CD8-positive, alpha-beta T cell (primary cell): ENCODE measurements at regions of chr15 and their contacts with region 1.

Region 1: GRCh38 chr15:85380217-85380811 is at the start of gene AKAP13:
- DNase-seq: peak; percentile 87 to 99 (median 93)
- ATAC-seq: peak; percentile 72
- H3K4me3 ChIP-seq: peak within 1 kb of the TSS; percentile 55 to 68
- H3K4me3 Mint-ChIP-seq: peak within 1 kb of the TSS; percentile 87
- H3K27ac ChIP-seq: peak within 1 kb of the TSS; percentile 56 to 66
- H3K27ac Mint-ChIP-seq: peak within 1 kb of the TSS; percentile 94
- H3K4me1 ChIP-seq: peaks cover 48% of the 10 kb centered on the region
- H3K4me1 Mint-ChIP-seq: peaks cover 56% of the 10 kb centered on the region
- H3K27me3 ChIP-seq: no peaks in the 10 kb centered on the region
- H3K27me3 Mint-ChIP-seq: no peaks in the 10 kb centered on the region
- CTCF ChIP-seq: no peak
- total RNA-seq, gene AKAP13: 255 to 267 TPM

Region 2: DNA sequence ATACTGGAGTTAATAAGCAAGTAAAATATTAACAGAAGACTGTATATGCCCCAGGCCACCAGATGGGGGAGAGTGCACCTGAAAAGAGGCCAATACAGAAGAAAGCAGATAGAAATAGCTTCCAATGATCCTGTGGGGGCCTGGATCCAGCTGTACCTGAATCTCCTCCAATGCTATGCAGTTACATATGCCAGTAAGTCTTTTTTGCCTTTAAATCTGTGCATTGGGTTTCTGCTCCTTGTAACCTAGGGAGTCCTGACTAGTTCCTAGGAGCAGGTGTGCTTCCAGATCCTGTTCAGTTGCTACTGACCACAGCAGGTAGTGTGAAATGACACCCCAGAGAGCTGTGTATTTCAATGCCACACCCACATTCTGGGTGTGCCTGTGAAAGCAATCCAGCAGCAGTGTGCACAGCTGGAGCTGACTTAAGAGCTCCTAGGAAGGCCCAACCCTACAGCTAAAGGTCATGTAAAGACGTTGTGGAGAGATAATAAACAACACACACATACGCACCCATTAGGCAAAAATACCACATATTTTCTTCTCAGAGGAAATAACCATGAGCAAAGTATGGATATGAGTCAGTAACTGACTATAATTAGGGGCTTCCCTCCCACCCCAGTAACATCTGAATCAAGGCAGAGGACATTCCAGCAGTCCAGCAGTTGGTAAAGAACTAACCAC is 62.1 kb before region 1 on chr15:
- CTCF ChIA-PET with region 1: no interaction called
- POLR2A ChIA-PET with region 1: interaction called, 3 read pairs
- intact Hi-C with region 1: loop called in 1 of 2 experiments (anchors 5 kb)
- DNase-seq: peak in 3 of 9 experiments; percentile 14 to 45 (median 38)
- ATAC-seq: peak; percentile 77
- H3K4me3 ChIP-seq: no peak overlapping the region
- H3K4me3 Mint-ChIP-seq: no peak overlapping the region
- H3K27ac ChIP-seq: no peak overlapping the region
- H3K27ac Mint-ChIP-seq: peak overlapping the region; percentile 53
- H3K4me1 ChIP-seq: peaks cover 24% of the 10 kb centered on the region
- H3K4me1 Mint-ChIP-seq: peaks cover 31% of the 10 kb centered on the region
- H3K27me3 ChIP-seq: no peaks in the 10 kb centered on the region
- H3K27me3 Mint-ChIP-seq: no peaks in the 10 kb centered on the region
- CTCF ChIP-seq: no peak

Region 3: GRCh38 chr15:85330901-85331588 is 49.3 kb before region 1 on chr15:
- CTCF ChIA-PET with region 1: interaction called, 6 read pairs
- POLR2A ChIA-PET with region 1: interaction called, 19 read pairs
- intact Hi-C with region 1: loop called (anchors 1 to 2 kb)
- DNase-seq: peak; percentile 37 to 86 (median 71)
- ATAC-seq: peak; percentile 77
- H3K4me3 ChIP-seq: peak overlapping the region; percentile 42 to 55
- H3K4me3 Mint-ChIP-seq: peak overlapping the region; percentile 92
- H3K27ac ChIP-seq: peak overlapping the region; percentile 14 to 58
- H3K27ac Mint-ChIP-seq: peak overlapping the region; percentile 93
- H3K4me1 ChIP-seq: peaks cover 26% of the 10 kb centered on the region
- H3K4me1 Mint-ChIP-seq: peaks cover 48% of the 10 kb centered on the region
- H3K27me3 ChIP-seq: no peaks in the 10 kb centered on the region
- H3K27me3 Mint-ChIP-seq: no peaks in the 10 kb centered on the region
- CTCF ChIP-seq: peak; percentile 43

Region 4: GRCh38 chr15:85407804-85408746 is 27.8 kb after region 1 on chr15:
- CTCF ChIA-PET with region 1: interaction called, 24 read pairs
- POLR2A ChIA-PET with region 1: interaction called, 14 read pairs
- intact Hi-C with region 1: loop called (anchors 1 to 2 kb)
- DNase-seq: peak in 4 of 9 experiments; percentile 7 to 64 (median 32)
- ATAC-seq: peak; percentile 73
- H3K4me3 ChIP-seq: no peak overlapping the region
- H3K4me3 Mint-ChIP-seq: peak overlapping the region; percentile 30
- H3K27ac ChIP-seq: peak overlapping the region in 1 of 2 experiments; percentile 26
- H3K27ac Mint-ChIP-seq: peak overlapping the region; percentile 71
- H3K4me1 ChIP-seq: peaks cover 51% of the 10 kb centered on the region
- H3K4me1 Mint-ChIP-seq: peaks cover 79% of the 10 kb centered on the region
- H3K27me3 ChIP-seq: no peaks in the 10 kb centered on the region
- H3K27me3 Mint-ChIP-seq: no peaks in the 10 kb centered on the region
- CTCF ChIP-seq: no peak

Region 5: GRCh38 chr15:85412956-85413854 is 32.9 kb after region 1 on chr15:
- CTCF ChIA-PET with region 1: interaction called, 24 read pairs
- POLR2A ChIA-PET with region 1: interaction called, 14 read pairs
- intact Hi-C with region 1: loop called (anchors 1 to 5 kb)
- DNase-seq: peak; percentile 42 to 86 (median 75)
- ATAC-seq: peak; percentile 95
- H3K4me3 ChIP-seq: peak overlapping the region in 1 of 2 experiments; percentile 12
- H3K4me3 Mint-ChIP-seq: peak overlapping the region; percentile 56
- H3K27ac ChIP-seq: peak overlapping the region in 1 of 2 experiments; percentile 77
- H3K27ac Mint-ChIP-seq: peak overlapping the region; percentile 89
- H3K4me1 ChIP-seq: peaks cover 26% of the 10 kb centered on the region
- H3K4me1 Mint-ChIP-seq: peaks cover 65% of the 10 kb centered on the region
- H3K27me3 ChIP-seq: no peaks in the 10 kb centered on the region
- H3K27me3 Mint-ChIP-seq: no peaks in the 10 kb centered on the region
- CTCF ChIP-seq: no peak

Region 6: GRCh38 chr15:85707519-85708338 is 327.4 kb after region 1 on chr15:
- CTCF ChIA-PET with region 1: no interaction called
- POLR2A ChIA-PET with region 1: no interaction called
- intact Hi-C with region 1: loop called in 1 of 2 experiments (anchors 5 kb)
- DNase-seq: no peak
- ATAC-seq: peak; percentile 22
- H3K4me3 ChIP-seq: peak overlapping the region; percentile 32 to 40
- H3K4me3 Mint-ChIP-seq: peak overlapping the region; percentile 77
- H3K27ac ChIP-seq: peak overlapping the region; percentile 66 to 97
- H3K27ac Mint-ChIP-seq: peak overlapping the region; percentile 99
- H3K4me1 ChIP-seq: peaks cover 56% of the 10 kb centered on the region
- H3K4me1 Mint-ChIP-seq: peaks cover 82% of the 10 kb centered on the region
- H3K27me3 ChIP-seq: no peaks in the 10 kb centered on the region
- H3K27me3 Mint-ChIP-seq: no peaks in the 10 kb centered on the region
- CTCF ChIP-seq: no peak

Region 7: DNA sequence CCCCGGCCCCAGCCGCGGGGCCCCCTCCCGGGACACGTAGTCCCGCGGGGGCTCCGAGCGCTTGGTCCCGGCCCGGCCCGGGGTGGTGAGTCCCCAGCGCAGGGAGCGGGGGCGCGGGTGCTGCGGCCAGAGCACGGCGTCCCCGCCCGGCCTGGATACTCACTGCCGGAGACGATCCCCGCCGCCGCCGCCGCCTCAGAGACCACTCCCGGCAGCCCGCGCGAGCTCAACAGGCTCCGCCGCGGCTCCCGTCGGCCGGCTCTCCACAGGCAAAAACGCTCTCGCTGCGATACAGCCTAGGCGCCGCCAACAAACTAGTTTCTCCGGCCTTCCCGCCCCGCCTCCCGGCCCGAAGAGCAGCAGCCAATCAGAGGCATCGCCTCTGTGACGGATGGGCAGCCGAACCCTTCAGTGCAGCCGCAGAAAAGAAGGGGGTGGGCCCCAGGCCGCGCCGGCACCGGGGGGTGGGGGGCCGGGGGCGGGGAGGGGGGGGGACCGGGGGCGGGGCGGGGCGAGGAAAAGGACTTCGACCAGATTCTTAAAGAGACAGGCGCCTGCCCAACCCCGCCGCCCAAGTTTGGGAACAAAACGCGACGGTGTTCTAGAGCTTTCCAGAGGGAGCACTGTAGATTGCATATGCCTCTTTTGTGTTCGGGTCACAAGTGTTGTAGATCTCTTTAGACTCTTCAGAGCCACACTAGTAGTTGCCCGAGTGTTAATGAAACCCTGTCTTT is 414.5 kb after region 1 on chr15 and contains the start of gene KLHL25:
- CTCF ChIA-PET with region 1: no interaction called
- POLR2A ChIA-PET with region 1: no interaction called
- intact Hi-C with region 1: loop called in 1 of 2 experiments (anchors 10 kb)
- DNase-seq: peak; percentile 84 to 97 (median 90)
- ATAC-seq: peak; percentile 98
- H3K4me3 ChIP-seq: peak within 1 kb of the TSS; percentile 62 to 86
- H3K4me3 Mint-ChIP-seq: peak within 1 kb of the TSS; percentile 93
- H3K27ac ChIP-seq: peak within 1 kb of the TSS; percentile 40 to 56
- H3K27ac Mint-ChIP-seq: peak within 1 kb of the TSS; percentile 89
- H3K4me1 ChIP-seq: peaks cover 28% of the 10 kb centered on the region
- H3K4me1 Mint-ChIP-seq: peaks cover 39% of the 10 kb centered on the region
- H3K27me3 ChIP-seq: no peaks in the 10 kb centered on the region
- H3K27me3 Mint-ChIP-seq: peaks cover 3% of the 10 kb centered on the region
- CTCF ChIP-seq: no peak
- total RNA-seq, gene KLHL25: 4.3 to 4.9 TPM